Dendritic cell treated with granulocyte-macrophage colony-stimulating factor and Interleukin-4, amounts not matched to agents 40 ng/mL and 50 ng/mL, for 4 days (primary cell): ENCODE measurements at regions of chr12 and their contacts with region 1.

Region 1: DNA sequence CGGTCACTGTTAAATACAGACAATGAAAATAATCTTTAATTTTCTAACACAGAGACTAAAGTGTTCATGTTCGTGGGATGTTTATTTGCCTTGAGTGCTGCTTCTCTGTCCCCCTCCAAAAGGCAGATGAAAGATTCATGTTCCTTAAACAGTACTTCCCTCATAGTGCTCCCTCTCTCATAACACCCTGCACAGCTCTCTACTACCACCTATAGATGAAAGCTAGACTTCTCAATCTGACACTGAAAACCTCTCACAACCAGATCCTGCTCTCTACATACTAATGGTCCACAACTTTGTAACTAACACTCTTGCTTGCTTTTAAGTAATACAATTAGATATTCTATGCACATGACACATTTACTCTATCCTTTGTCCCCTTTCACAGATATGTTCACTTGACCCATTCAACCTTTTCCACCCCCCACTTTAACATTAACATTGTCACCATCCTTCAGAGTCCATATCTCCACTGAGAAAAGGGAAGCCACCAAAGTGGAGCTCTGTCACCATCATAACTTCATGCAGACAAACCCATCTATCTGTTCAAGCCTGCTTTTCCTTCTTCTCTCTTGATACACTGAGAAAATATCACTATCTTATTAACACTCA is 266.4 kb upstream of the USP15 start:
- H3K4me3 Mint-ChIP-seq: no peak overlapping the region
- H3K27ac Mint-ChIP-seq: no peak overlapping the region
- H3K4me1 Mint-ChIP-seq: peaks cover 12% of the 10 kb centered on the region
- H3K27me3 Mint-ChIP-seq: no peaks in the 10 kb centered on the region

Region 2: DNA sequence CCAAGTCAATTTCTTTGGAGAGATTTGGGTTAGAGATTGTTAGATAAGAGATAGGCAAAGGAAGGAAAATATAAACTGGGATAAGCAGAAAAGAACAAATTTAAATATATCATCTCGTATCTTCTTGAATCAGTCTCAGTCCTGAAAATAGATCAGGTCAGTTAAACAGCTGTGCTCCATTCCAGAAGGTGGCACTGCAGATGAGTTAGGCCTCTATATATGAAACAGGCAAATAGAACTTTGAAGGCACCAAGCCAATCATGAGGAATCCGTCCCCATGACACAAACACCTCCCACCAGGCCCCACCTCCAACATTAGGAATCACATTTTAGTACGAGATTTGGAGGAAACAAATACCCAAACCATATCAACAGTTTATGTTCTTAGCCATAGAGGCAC is 339.1 kb before region 1 on chr12:
- intact Hi-C with region 1: loop called (anchors 5 kb)
- H3K4me3 Mint-ChIP-seq: no peak overlapping the region
- H3K27ac Mint-ChIP-seq: no peak overlapping the region
- H3K4me1 Mint-ChIP-seq: no peaks in the 10 kb centered on the region
- H3K27me3 Mint-ChIP-seq: no peaks in the 10 kb centered on the region

Region 3: GRCh38 chr12:61870658-61871484 is 123.0 kb before region 1 on chr12:
- intact Hi-C with region 1: loop called (anchors 10 kb)
- H3K4me3 Mint-ChIP-seq: no peak overlapping the region
- H3K27ac Mint-ChIP-seq: no peak overlapping the region
- H3K4me1 Mint-ChIP-seq: no peaks in the 10 kb centered on the region
- H3K27me3 Mint-ChIP-seq: no peaks in the 10 kb centered on the region